HCT116 (cell line): ENCODE measurements at regions of chr1 and their contacts with region 1.

Region 1: DNA sequence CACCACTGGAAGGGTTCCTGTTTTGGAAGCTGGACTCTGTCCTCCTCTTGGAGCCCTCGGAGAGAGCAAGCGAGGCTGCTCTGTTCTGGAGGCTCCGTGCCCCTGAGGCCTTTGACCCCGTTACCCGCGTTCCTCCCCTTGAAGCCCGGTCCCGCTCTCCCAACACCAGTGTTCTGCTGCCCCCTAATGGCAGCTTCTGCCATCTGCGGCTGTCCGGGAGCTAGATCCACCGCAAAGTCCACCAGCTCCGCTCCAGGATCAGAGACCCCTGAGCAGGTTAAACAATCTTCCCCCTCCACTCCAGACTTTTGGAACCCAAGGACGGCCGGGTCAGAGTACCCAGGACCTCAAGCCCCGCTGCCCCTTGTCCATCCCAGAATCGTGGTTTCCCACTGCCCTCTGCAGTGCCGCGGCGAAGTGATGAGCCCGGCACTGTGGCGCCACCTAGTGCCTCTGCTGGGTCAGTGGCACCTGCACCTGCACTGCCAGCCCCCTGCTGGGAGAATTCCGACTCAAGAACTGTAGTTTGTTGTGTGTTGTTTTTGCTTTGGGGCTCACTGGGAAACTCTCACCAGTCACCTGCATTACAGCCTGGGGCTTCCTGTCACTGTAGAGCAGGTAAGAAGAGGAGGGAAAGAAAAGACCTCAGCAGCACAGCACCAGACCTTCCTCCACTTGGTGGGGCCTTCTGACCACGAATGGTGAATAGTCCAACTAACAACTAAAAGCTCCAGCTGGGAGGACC is 63.5 kb upstream of the NFASC start:
- DNase-seq: peak; percentile 76
- ATAC-seq: peak; percentile 94
- H3K4me3 ChIP-seq: peak overlapping the region; percentile 42 to 61
- H3K27ac ChIP-seq: no peak overlapping the region
- H3K4me1 ChIP-seq: peaks cover 0 to 12% of the 10 kb centered on the region in 2 experiments; a peak in 2 of 4 replicates
- H3K27me3 ChIP-seq: peaks cover 8% of the 10 kb centered on the region; the same call in 1 of the 2 replicates
- CTCF ChIP-seq: peak; percentile 99 to 100 (median 99)
- POLR2A ChIP-seq: no peak
- RAD21 ChIP-seq: peak; percentile 92

Region 2: GRCh38 chr1:204431310-204432165 is 375.6 kb before region 1 on chr1:
- CTCF ChIA-PET with region 1: interaction called, 18 read pairs
- POLR2A ChIA-PET with region 1: no interaction called
- RAD21 ChIA-PET with region 1: interaction called in 1 of 2 experiments, 4 read pairs
- intact Hi-C with region 1: loop called (anchors 5 kb)
- DNase-seq: no peak
- ATAC-seq: peak; percentile 97
- H3K4me3 ChIP-seq: no peak overlapping the region
- H3K27ac ChIP-seq: no peak overlapping the region
- H3K4me1 ChIP-seq: peaks cover 0 to 2% of the 10 kb centered on the region in 2 experiments; a peak in 2 of 4 replicates
- H3K27me3 ChIP-seq: no peaks in the 10 kb centered on the region
- CTCF ChIP-seq: peak; percentile 69 to 97 (median 95)
- POLR2A ChIP-seq: no peak
- RAD21 ChIP-seq: peak; percentile 65

Region 3: DNA sequence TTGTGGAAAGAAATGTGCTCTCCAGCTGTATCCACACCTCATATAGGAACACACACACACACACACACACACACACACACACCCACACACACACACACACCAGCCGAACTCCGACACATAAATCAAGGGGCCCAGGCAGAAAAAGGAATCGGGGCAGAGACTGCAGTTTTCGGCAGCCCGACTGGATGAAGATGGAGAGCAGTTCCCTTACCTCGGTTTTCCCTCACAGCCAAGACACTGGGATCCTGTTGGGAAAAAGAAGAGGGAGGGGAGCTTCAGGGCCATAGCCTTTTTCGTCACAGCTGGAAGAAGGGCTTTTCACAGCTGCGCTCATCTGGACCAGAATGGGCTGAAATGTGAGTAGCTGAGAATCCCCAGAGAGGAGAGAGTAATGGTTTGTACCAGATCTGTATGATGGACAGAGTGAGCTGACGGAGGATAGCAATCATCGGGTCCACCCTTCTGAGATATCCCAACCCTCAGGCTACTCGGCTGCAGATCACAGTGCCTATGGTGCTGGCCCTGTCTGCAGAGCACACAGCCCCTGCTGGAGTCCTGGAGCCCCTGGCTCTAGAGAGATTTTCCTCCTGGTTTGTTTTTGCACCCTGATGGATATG is 350.2 kb before region 1 on chr1:
- CTCF ChIA-PET with region 1: no interaction called
- POLR2A ChIA-PET with region 1: no interaction called
- RAD21 ChIA-PET with region 1: no interaction called
- intact Hi-C with region 1: no loop called
- DNase-seq: no peak
- ATAC-seq: no peak
- H3K4me3 ChIP-seq: no peak overlapping the region
- H3K27ac ChIP-seq: no peak overlapping the region
- H3K4me1 ChIP-seq: no peaks in the 10 kb centered on the region
- H3K27me3 ChIP-seq: no peaks in the 10 kb centered on the region
- CTCF ChIP-seq: no peak
- POLR2A ChIP-seq: no peak
- RAD21 ChIP-seq: no peak

Region 4: GRCh38 chr1:204506961-204507387 is 300.1 kb before region 1 on chr1:
- CTCF ChIA-PET with region 1: interaction called, 38 read pairs
- POLR2A ChIA-PET with region 1: no interaction called
- RAD21 ChIA-PET with region 1: interaction called, 3 read pairs
- intact Hi-C with region 1: no loop called
- DNase-seq: peak; percentile 87
- ATAC-seq: peak; percentile 82
- H3K4me3 ChIP-seq: peak overlapping the region; percentile 7 to 38; a peak in 3 of 4 replicates
- H3K27ac ChIP-seq: peak overlapping the region; percentile 60
- H3K4me1 ChIP-seq: peaks cover 30 to 47% of the 10 kb centered on the region in 2 experiments
- H3K27me3 ChIP-seq: no peaks in the 10 kb centered on the region
- CTCF ChIP-seq: no peak
- POLR2A ChIP-seq: no peak
- RAD21 ChIP-seq: no peak

Region 5: DNA sequence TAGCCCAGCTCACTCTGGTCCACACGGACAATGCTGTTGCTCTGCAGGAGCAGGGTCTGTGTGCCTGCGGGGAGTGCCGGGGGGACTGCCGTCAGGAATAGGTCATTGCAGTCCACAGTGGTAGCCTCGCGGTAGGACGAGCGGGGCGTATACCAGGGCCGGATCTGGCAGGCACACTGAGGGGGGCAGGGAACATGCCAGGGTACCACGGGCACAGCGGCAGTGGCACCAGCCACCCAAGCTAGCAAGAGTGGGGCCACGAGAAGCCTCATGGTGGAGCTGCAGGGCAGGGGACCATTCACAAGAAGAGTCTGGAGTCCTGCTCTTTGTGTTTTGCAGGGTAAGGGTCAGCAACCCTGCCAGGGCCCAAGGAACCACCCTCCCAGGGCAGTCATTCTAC is 187.4 kb before region 1 on chr1:
- CTCF ChIA-PET with region 1: interaction called, 12 read pairs
- POLR2A ChIA-PET with region 1: no interaction called
- RAD21 ChIA-PET with region 1: interaction called in 1 of 2 experiments, 8 read pairs
- intact Hi-C with region 1: no loop called
- DNase-seq: no peak
- ATAC-seq: no peak
- H3K4me3 ChIP-seq: no peak overlapping the region
- H3K27ac ChIP-seq: no peak overlapping the region
- H3K4me1 ChIP-seq: peaks cover 24 to 29% of the 10 kb centered on the region in 2 experiments
- H3K27me3 ChIP-seq: 0 out of 2 replicates have a peak, but pooled peaks cover under 1% of the 10 kb centered on the region
- CTCF ChIP-seq: 0 out of 6 replicates have a peak, but pooled peaks of 1 of the 3 experiments have one; percentile 14
- POLR2A ChIP-seq: no peak
- RAD21 ChIP-seq: peak; percentile 44

Region 6: GRCh38 chr1:204630132-204630905 is 176.8 kb before region 1 on chr1:
- CTCF ChIA-PET with region 1: no interaction called
- POLR2A ChIA-PET with region 1: no interaction called
- RAD21 ChIA-PET with region 1: no interaction called
- intact Hi-C with region 1: no loop called
- DNase-seq: no peak
- ATAC-seq: no peak
- H3K4me3 ChIP-seq: no peak overlapping the region
- H3K27ac ChIP-seq: no peak overlapping the region
- H3K4me1 ChIP-seq: no peaks in the 10 kb centered on the region
- H3K27me3 ChIP-seq: no peaks in the 10 kb centered on the region
- CTCF ChIP-seq: no peak
- POLR2A ChIP-seq: no peak
- RAD21 ChIP-seq: no peak

Region 7: DNA sequence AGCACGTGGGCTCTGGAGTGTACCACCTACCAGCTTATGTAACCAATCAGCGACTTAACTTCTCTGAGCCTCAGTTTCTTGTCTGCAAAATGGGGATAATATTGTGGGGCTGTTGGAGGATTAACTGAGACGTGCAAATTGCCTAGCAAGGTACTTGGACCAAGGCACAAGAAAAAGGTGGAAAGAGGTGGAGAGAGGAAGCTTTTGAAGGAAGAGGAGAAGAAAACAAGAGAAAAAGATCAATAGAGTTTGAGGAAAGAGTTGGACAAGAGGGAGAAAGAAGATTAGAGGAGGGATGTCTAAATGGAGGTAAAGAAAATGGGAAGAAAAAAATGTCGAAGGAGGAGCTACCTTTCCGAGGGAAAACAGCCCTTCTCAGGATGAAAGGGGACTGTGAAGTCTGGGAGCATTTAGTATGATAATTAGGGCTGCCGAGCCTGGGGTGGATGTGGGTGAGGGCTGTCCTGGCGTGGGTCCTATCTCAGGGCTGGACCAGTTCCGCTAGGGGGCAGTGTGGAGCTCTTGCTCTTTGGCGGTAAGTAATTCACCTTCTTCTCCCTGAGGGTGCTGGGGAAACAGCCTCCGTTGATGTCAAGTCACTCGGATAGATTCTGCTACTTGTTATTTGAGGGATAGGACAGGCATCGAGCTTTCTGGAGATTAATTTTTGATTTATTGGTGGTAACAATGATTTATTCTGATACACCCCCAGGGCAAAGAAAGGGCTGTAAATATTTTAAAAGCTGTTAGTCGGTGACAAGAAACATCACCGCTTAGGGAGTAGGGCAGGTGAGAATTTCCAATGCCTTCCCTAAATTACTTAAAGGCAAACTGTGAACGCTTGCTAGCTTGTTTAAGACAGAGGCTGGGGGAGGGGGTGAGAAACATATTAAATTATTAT is 15.4 kb before region 1 on chr1:
- CTCF ChIA-PET with region 1: interaction called, 28 read pairs
- POLR2A ChIA-PET with region 1: no interaction called
- RAD21 ChIA-PET with region 1: no interaction called
- intact Hi-C with region 1: no loop called
- DNase-seq: peak; percentile 72
- ATAC-seq: peak; percentile 99
- H3K4me3 ChIP-seq: no peak overlapping the region
- H3K27ac ChIP-seq: no peak overlapping the region
- H3K4me1 ChIP-seq: 0 out of 4 replicates have a peak, but pooled peaks cover 0 to 5% of the 10 kb centered on the region in 2 experiments
- H3K27me3 ChIP-seq: peaks cover 26% of the 10 kb centered on the region; the same call in 1 of the 2 replicates
- CTCF ChIP-seq: peak; percentile 60 to 97 (median 92); a peak in 5 of 6 replicates
- POLR2A ChIP-seq: no peak
- RAD21 ChIP-seq: peak; percentile 36

Region 8: GRCh38 chr1:204941421-204942338 is 134.6 kb after region 1 on chr1:
- CTCF ChIA-PET with region 1: interaction called, 44 read pairs
- POLR2A ChIA-PET with region 1: no interaction called
- RAD21 ChIA-PET with region 1: no interaction called
- intact Hi-C with region 1: loop called (anchors 1 kb)
- DNase-seq: peak; percentile 34
- ATAC-seq: peak; percentile 93
- H3K4me3 ChIP-seq: no peak overlapping the region
- H3K27ac ChIP-seq: no peak overlapping the region
- H3K4me1 ChIP-seq: no peaks in the 10 kb centered on the region
- H3K27me3 ChIP-seq: peaks cover 18% of the 10 kb centered on the region; the same call in 1 of the 2 replicates
- CTCF ChIP-seq: peak; percentile 87 to 95 (median 95)
- POLR2A ChIP-seq: no peak
- RAD21 ChIP-seq: peak; percentile 76

Region 9: GRCh38 chr1:204983136-204983535 is 176.0 kb after region 1 on chr1:
- CTCF ChIA-PET with region 1: no interaction called
- POLR2A ChIA-PET with region 1: no interaction called
- RAD21 ChIA-PET with region 1: no interaction called
- intact Hi-C with region 1: no loop called
- DNase-seq: no peak
- ATAC-seq: no peak
- H3K4me3 ChIP-seq: no peak overlapping the region
- H3K27ac ChIP-seq: no peak overlapping the region
- H3K4me1 ChIP-seq: no peaks in the 10 kb centered on the region
- H3K27me3 ChIP-seq: peaks cover 19% of the 10 kb centered on the region; the same call in 1 of the 2 replicates
- CTCF ChIP-seq: no peak
- POLR2A ChIP-seq: no peak
- RAD21 ChIP-seq: no peak

Region 10: GRCh38 chr1:205077158-205077933 is 270.2 kb after region 1 on chr1:
- CTCF ChIA-PET with region 1: no interaction called
- POLR2A ChIA-PET with region 1: no interaction called
- RAD21 ChIA-PET with region 1: no interaction called
- intact Hi-C with region 1: no loop called
- DNase-seq: no peak
- ATAC-seq: no peak
- H3K4me3 ChIP-seq: no peak overlapping the region
- H3K27ac ChIP-seq: no peak overlapping the region
- H3K4me1 ChIP-seq: no peaks in the 10 kb centered on the region
- H3K27me3 ChIP-seq: no peaks in the 10 kb centered on the region
- CTCF ChIP-seq: no peak
- POLR2A ChIP-seq: no peak
- RAD21 ChIP-seq: no peak